ENCODE measurements at regions of chr11 and their contacts with region 1.

Region 1: DNA sequence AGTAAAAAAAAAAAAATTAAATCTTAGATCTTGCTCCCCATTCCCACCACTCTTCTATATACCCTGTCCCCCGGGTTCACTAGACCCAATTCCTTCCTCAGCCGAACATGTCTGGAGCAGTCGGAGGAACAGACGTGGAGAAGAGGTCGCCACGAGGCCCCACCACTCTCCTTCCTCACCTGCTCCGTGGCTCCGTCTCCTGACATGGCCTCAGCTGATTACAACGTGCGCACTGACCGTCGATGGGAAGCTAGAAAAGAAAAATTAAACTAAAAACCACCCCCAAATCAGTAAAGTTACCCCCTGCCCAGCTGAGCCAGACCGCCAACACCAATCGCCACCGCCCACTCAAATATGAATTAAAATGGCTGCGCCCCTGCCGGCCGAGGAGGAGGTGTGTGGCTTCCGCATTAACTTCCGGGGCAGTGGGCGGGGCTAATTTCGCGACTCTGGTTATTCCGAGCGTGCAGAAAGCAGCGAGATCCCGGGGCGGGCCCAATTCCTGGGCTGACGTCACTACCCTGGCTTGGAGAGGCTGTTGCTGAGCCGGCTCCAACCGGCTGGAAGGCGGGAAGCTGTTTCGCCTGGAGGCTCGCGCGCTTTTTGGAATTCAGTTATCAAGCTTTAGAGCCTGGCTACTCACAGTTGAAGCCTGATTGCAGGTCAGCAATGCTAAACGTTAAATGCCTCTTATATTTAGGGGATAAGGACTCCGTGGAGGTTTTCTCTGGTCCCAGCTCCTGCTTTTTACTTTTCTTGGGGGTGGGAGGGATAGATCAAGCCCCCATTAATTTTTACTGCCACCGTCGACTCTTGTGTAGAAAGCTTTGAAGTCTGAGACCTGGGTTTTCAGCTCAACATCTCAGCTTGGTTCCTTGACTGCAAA is at the start of gene CSTF3:
- ATAC-seq: peak; percentile 96 to 99 (median 98)
- H3K4me3 ChIP-seq: peak within 1 kb of the TSS; percentile 66 to 93 (median 68)
- H3K27ac ChIP-seq: peak within 1 kb of the TSS; percentile 87 to 94
- H3K4me1 ChIP-seq: peaks cover 5 to 12% of the 10 kb centered on the region in 2 donors
- total RNA-seq, gene CSTF3: 45.1 to 85.8 (median 67.4) TPM

Region 2: DNA sequence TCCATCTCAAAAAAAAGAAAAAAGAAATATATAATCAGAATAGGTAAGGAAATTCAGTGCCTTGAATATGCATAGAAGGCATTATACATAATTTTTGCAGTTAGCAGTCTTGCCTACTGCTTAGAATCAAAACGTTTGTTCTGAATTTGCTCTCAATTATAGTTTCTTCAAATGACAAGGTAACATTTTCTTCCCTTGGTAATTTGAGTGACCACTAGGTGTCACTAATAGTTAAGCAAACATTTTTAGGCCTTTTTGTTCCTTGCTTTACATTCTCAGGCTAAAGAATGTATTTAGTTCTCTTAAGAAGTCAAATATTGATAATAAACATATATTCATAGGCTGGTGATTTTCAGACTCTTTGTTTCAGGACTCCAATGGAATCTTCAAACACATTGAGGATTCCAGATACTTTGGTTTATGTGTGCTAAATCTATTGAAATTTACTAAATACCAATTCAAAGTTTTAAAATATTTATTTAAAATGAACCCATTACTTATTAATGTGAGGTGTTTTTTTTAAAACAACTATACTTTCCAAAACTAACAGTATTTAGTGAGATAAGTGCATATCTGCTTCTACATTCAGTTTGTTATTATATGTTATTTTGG is 200.7 kb before region 1 on chr11:
- in situ Hi-C with region 1: no loop called
- ATAC-seq: peak in 3 of 8 experiments; percentile 19 to 30 (median 25)
- H3K4me3 ChIP-seq: no peak overlapping the region
- H3K27ac ChIP-seq: no peak overlapping the region
- H3K4me1 ChIP-seq: no peaks in the 10 kb centered on the region

Region 3: DNA sequence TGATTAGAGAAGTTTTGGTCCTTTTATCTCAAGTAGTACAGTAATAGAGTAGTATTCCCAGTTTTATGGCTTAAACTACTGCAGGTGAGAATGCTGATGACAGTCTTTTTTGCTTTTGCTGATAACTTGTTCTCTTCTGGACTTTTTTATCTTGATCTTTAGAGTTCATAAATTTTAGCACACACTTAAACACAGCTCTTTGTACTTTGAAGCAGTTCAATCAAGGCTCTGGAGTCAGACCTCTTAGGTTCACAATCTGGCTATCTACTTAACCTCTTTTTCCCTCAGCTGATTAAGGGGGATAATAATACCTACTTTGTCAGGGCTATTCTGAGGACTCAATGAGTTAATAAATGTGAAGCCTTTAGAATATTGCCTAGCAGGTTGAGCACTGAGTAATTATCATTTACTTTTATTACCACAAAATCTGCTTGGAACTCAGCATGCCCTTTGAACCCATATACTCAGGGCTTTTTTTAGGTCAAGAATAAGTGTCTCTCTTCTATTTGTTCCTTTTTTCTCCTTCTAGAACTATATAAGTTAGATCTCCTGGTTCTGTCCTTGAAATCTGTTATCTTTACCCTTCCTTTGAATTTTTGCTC is 52.0 kb before region 1 on chr11:
- in situ Hi-C with region 1: loop called in 1 of 9 experiments (anchors 10 kb)
- ATAC-seq: no peak
- H3K4me3 ChIP-seq: no peak overlapping the region
- H3K27ac ChIP-seq: no peak overlapping the region
- H3K4me1 ChIP-seq: no peaks in the 10 kb centered on the region

Region 4: GRCh38 chr11:33329705-33330329 is 168.5 kb after region 1 on chr11:
- in situ Hi-C with region 1: loop called in 5 of 9 experiments (anchors 10 to 25 kb)
- ATAC-seq: peak in 5 of 8 experiments; percentile 41 to 83 (median 78)
- H3K4me3 ChIP-seq: no peak overlapping the region
- H3K27ac ChIP-seq: no peak overlapping the region
- H3K4me1 ChIP-seq: no peaks in the 10 kb centered on the region

Region 5: DNA sequence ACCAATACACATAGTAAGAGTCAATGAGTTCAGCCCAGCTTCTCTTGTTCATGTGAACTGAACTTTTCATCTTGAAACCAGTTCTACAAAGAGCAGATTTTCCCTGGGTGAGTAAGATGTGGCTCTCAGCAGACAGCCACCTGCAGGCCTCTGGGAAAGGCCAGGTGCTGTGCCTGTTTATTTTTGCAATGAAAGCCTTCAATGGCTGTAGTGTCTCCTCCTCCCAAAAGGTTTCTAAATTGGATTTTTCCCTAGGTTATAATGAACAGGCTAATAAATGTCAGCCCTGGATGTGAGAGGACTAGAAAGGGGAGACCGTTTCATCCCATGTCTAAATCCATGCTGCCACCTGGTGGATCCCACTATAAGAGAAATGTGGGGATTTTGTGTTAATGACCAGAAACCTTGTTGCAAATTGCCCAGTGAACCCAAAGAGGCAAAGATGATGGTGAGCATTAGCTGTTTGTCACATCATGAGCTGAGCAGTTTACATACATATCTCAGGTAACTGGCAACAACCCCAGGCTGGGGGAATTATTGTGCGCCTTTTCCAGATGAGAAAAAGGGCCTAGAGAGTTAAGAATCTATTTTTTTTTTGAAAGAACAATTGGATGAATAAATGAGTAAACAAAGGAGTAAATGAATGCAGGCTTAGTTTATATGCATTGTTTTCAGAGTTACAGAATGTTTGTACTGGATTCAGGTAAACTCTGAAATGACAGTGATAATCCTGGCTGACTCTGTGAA is 526.5 kb after region 1 on chr11:
- in situ Hi-C with region 1: loop called in 1 of 9 experiments (anchors 25 kb)
- ATAC-seq: peak in 6 of 8 experiments; percentile 39 to 49 (median 44)
- H3K4me3 ChIP-seq: no peak overlapping the region
- H3K27ac ChIP-seq: no peak overlapping the region
- H3K4me1 ChIP-seq: peaks cover 8 to 16% of the 10 kb centered on the region in 2 donors